ENCODE measurements at regions of chr21 and their contacts with region 1.

Region 1: GRCh38 chr21:39445321-39446269 is at the start of gene LCA5L:
- DNase-seq: peak; percentile 71 to 91 (median 80)
- H3K4me3 ChIP-seq: peak within 1 kb of the TSS; percentile 63 to 99 (median 90)
- H3K27ac ChIP-seq: peak within 1 kb of the TSS; percentile 83 to 100 (median 97)
- H3K27me3 ChIP-seq: no peaks in the 10 kb centered on the region
- CTCF ChIP-seq: peak in 37 of 56 donors; percentile 8 to 57 (median 33)
- total RNA-seq, gene LCA5L: 0.36 to 4.6 (median 1.6) TPM in 117 of 120 experiments, not detected in the others

Region 2: DNA sequence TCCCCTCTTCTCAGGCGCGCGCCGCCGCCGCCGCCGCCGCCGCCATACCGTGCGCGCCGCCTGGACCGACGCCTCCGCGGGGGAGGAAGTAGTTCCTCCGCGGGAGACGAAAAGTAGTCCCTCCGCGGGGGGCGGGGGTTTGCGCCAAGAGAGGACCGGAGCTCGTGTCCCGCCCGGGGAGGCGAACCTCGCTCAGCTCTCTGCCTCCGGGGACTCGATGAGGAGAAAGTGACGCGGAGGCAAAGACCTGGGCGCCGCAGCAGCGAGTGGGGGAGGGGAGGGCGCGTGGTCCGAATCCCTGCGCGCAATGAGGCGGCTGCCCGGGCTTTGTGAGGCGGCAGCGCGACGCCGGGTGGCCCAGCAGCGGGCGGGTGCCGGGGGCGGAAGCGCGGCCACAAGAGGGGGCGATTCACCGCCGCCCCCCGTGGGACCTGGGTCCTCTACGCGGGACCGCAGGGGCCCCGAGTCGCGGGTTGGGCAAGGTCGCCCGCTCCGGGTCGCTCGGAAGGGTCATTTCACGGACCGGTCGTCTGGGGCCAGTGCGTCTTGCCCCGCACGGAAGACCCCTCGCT is 131.9 kb before region 1 on chr21 and contains the start of gene BRWD1:
- intact Hi-C with region 1: loop called in 1 of 2 experiments (anchors 5 kb)
- DNase-seq: peak; percentile 54 to 81 (median 68)
- H3K4me3 ChIP-seq: peak within 1 kb of the TSS; percentile 55 to 98 (median 87)
- H3K27ac ChIP-seq: peak within 1 kb of the TSS; percentile 81 to 100 (median 98)
- H3K27me3 ChIP-seq: no peaks in the 10 kb centered on the region
- CTCF ChIP-seq: peak in 51 of 56 donors; percentile 17 to 63 (median 44)
- total RNA-seq, gene BRWD1: 78.6 to 146 (median 112) TPM

Region 3: GRCh38 chr21:39388038-39388810 is 57.4 kb before region 1 on chr21:
- intact Hi-C with region 1: loop called (anchors 5 kb)
- DNase-seq: peak; percentile 83 to 95 (median 90)
- H3K4me3 ChIP-seq: peak overlapping the region; percentile 28 to 69 (median 57)
- H3K27ac ChIP-seq: peak overlapping the region in 48 of 59 donors; percentile 2 to 95 (median 76)
- H3K27me3 ChIP-seq: no peaks in the 10 kb centered on the region
- CTCF ChIP-seq: peak; percentile 76 to 98 (median 94)

Region 4: GRCh38 chr21:39660191-39660980 is 214.8 kb after region 1 on chr21:
- intact Hi-C with region 1: no loop called
- DNase-seq: no peak
- H3K4me3 ChIP-seq: no peak overlapping the region
- H3K27ac ChIP-seq: no peak overlapping the region
- H3K27me3 ChIP-seq: no peaks in the 10 kb centered on the region
- CTCF ChIP-seq: no peak

Region 5: GRCh38 chr21:39715804-39716397 is 270.3 kb after region 1 on chr21:
- intact Hi-C with region 1: loop called in 1 of 2 experiments (anchors 5 kb)
- DNase-seq: peak in 7 of 10 donors; percentile 37 to 75 (median 52)
- H3K4me3 ChIP-seq: no peak overlapping the region
- H3K27ac ChIP-seq: no peak overlapping the region
- H3K27me3 ChIP-seq: peaks cover 0 to 5% (median 0%) of the 10 kb centered on the region in 45 donors
- CTCF ChIP-seq: peak; percentile 63 to 90 (median 78)